CD8-positive, alpha-beta memory T cell (primary cell): ENCODE measurements at regions of chr14 and their contacts with region 1.

Region 1: GRCh38 chr14:69242311-69243224 is 17.4 kb upstream of the GALNT16 start:
- DNase-seq: peak; percentile 9 to 57 (median 31)
- H3K4me3 ChIP-seq: no peak overlapping the region
- H3K4me3 Mint-ChIP-seq: no peak overlapping the region
- H3K27ac ChIP-seq: no peak overlapping the region
- H3K27ac Mint-ChIP-seq: peak overlapping the region in 2 of 8 donors; percentile 52 to 89
- H3K4me1 ChIP-seq: no peaks in the 10 kb centered on the region
- H3K4me1 Mint-ChIP-seq: peaks cover 3 to 6% (median 4%) of the 10 kb centered on the region in 3 donors
- H3K27me3 ChIP-seq: no peaks in the 10 kb centered on the region
- H3K27me3 Mint-ChIP-seq: no peaks in the 10 kb centered on the region

Region 2: DNA sequence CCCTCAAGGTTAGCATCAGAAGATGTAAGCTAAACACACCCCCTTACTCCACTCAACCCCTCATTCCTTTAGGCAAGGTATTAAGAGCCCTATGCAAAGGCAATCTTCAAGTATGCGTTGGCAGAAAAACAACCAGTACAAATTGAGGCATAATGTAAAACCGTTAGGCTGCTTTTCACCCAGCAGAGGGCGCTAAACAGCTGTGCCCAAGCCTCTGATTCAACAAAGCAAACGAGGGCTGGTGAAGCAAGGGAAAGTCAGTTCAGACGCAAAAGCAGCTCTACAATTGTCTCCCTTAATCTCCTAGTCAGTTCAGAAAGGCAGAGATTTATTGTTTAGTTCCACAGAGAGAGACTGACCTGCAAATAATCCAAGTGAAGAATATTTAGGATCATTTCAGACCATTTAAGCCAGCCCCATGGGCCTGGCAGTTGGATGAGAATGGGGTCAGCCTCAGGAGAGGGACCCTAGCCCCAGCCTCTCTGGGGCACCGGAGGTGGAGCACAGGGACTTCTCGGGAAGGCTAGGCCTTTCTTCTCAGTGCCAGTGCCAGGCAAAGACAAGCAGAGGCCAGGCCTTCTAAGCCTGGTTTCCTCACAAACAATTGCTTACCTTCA is 113.2 kb before region 1 on chr14:
- CTCF ChIA-PET with region 1: interaction called, 13 read pairs
- POLR2A ChIA-PET with region 1: no interaction called
- DNase-seq: peak; percentile 53 to 81 (median 55)
- H3K4me3 ChIP-seq: no peak overlapping the region
- H3K4me3 Mint-ChIP-seq: peak overlapping the region in 1 of 7 donors; percentile 10
- H3K27ac ChIP-seq: no peak overlapping the region
- H3K27ac Mint-ChIP-seq: peak overlapping the region; percentile 7 to 87 (median 74)
- H3K4me1 ChIP-seq: peaks cover 29% of the 10 kb centered on the region
- H3K4me1 Mint-ChIP-seq: peaks cover 65 to 93% (median 89%) of the 10 kb centered on the region in 3 donors
- H3K27me3 ChIP-seq: no peaks in the 10 kb centered on the region
- H3K27me3 Mint-ChIP-seq: no peaks in the 10 kb centered on the region

Region 3: GRCh38 chr14:69161590-69161989 is 81.0 kb before region 1 on chr14:
- CTCF ChIA-PET with region 1: no interaction called
- POLR2A ChIA-PET with region 1: no interaction called
- DNase-seq: no peak
- H3K4me3 ChIP-seq: no peak overlapping the region
- H3K4me3 Mint-ChIP-seq: no peak overlapping the region
- H3K27ac ChIP-seq: no peak overlapping the region
- H3K27ac Mint-ChIP-seq: no peak overlapping the region
- H3K4me1 ChIP-seq: no peaks in the 10 kb centered on the region
- H3K4me1 Mint-ChIP-seq: no peaks in the 10 kb centered on the region
- H3K27me3 ChIP-seq: no peaks in the 10 kb centered on the region
- H3K27me3 Mint-ChIP-seq: peaks cover 30 to 47% of the 10 kb centered on the region in 2 donors

Region 4: GRCh38 chr14:69346710-69347109 is 104.1 kb after region 1 on chr14:
- CTCF ChIA-PET with region 1: no interaction called
- POLR2A ChIA-PET with region 1: no interaction called
- DNase-seq: no peak
- H3K4me3 ChIP-seq: no peak overlapping the region
- H3K4me3 Mint-ChIP-seq: no peak overlapping the region
- H3K27ac ChIP-seq: no peak overlapping the region
- H3K27ac Mint-ChIP-seq: no peak overlapping the region
- H3K4me1 ChIP-seq: no peaks in the 10 kb centered on the region
- H3K4me1 Mint-ChIP-seq: no peaks in the 10 kb centered on the region
- H3K27me3 ChIP-seq: no peaks in the 10 kb centered on the region
- H3K27me3 Mint-ChIP-seq: peaks cover 17 to 18% of the 10 kb centered on the region in 2 donors

Region 5: GRCh38 chr14:69432364-69432763 is 189.8 kb after region 1 on chr14:
- CTCF ChIA-PET with region 1: no interaction called
- POLR2A ChIA-PET with region 1: no interaction called
- DNase-seq: no peak
- H3K4me3 ChIP-seq: no peak overlapping the region
- H3K4me3 Mint-ChIP-seq: no peak overlapping the region
- H3K27ac ChIP-seq: no peak overlapping the region
- H3K27ac Mint-ChIP-seq: no peak overlapping the region
- H3K4me1 ChIP-seq: no peaks in the 10 kb centered on the region
- H3K4me1 Mint-ChIP-seq: peaks cover 18 to 39% (median 20%) of the 10 kb centered on the region in 3 donors
- H3K27me3 ChIP-seq: no peaks in the 10 kb centered on the region
- H3K27me3 Mint-ChIP-seq: no peaks in the 10 kb centered on the region

Region 6: DNA sequence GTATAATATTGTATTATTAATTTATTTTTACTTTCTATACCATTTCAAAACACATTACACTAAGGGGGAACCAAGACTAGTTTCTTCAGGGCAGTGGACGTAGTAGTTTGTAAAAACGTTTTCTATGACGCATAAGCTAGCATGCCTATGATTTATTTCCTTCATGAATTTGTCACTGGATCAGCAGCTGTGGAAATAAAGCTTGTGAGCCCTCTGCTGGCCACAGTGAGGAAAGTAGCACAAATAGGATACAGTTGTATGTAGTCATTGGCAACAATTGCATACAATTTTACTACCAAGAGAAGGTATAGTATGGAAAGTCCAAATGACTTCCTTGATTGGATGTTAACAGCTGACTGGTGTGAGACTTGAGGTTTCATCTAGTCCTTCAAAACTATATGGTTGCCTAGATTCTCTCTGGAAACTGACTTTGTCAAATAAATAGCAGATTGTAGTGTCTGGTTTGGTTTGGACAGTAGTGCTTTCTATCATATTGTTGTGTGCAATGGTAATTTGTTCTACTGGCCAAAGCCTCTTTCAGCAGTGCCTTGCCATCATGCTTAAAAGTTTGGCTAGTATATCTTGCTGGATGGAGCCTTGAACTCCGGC is 217.6 kb after region 1 on chr14:
- CTCF ChIA-PET with region 1: interaction called, 18 read pairs
- POLR2A ChIA-PET with region 1: interaction called, 3 read pairs
- DNase-seq: peak in 4 of 5 donors; percentile 20 to 56 (median 28)
- H3K4me3 ChIP-seq: no peak overlapping the region
- H3K4me3 Mint-ChIP-seq: no peak overlapping the region
- H3K27ac ChIP-seq: no peak overlapping the region
- H3K27ac Mint-ChIP-seq: no peak overlapping the region
- H3K4me1 ChIP-seq: no peaks in the 10 kb centered on the region
- H3K4me1 Mint-ChIP-seq: no peaks in the 10 kb centered on the region
- H3K27me3 ChIP-seq: no peaks in the 10 kb centered on the region
- H3K27me3 Mint-ChIP-seq: no peaks in the 10 kb centered on the region